ENCODE measurements at regions of chr11 and their contacts with region 1.

Region 1: GRCh38 chr11:96389720-96390487 is at the starts of genes CCDC82 and JRKL:
- DNase-seq: peak; percentile 96 to 99 (median 98)
- ATAC-seq: peak; percentile 99
- H3K4me3 ChIP-seq: peak within 1 kb of the TSS; percentile 66
- H3K4me3 Mint-ChIP-seq: peak within 1 kb of the TSS; percentile 84 to 99 (median 94)
- H3K27ac ChIP-seq: peak within 1 kb of the TSS; percentile 86
- H3K27ac Mint-ChIP-seq: peak within 1 kb of the TSS; percentile 71 to 97 (median 91)
- H3K4me1 ChIP-seq: peaks cover 17 to 18% of the 10 kb centered on the region in 2 donors
- H3K4me1 Mint-ChIP-seq: peaks cover 32 to 66% (median 60%) of the 10 kb centered on the region in 7 donors
- H3K27me3 ChIP-seq: no peaks in the 10 kb centered on the region
- H3K27me3 Mint-ChIP-seq: no peaks in the 10 kb centered on the region
- total RNA-seq, gene CCDC82: 21.9 to 46.2 (median 32.0) TPM
- total RNA-seq, gene JRKL: 5.4 to 17.3 (median 10.1) TPM

Region 2: GRCh38 chr11:94543695-94544645 is 1845.9 kb before region 1 on chr11 and contains the start of gene FUT4:
- CTCF ChIA-PET with region 1: no interaction called
- POLR2A ChIA-PET with region 1: no interaction called
- intact Hi-C with region 1: loop called in 1 of 2 experiments (anchors 5 kb)
- DNase-seq: peak; percentile 51 to 83 (median 70)
- ATAC-seq: peak; percentile 84
- H3K4me3 ChIP-seq: peak within 1 kb of the TSS; percentile 85
- H3K4me3 Mint-ChIP-seq: peak within 1 kb of the TSS; percentile 93 to 100 (median 98)
- H3K27ac ChIP-seq: peak within 1 kb of the TSS; percentile 88
- H3K27ac Mint-ChIP-seq: peak within 1 kb of the TSS; percentile 96 to 100 (median 99)
- H3K4me1 ChIP-seq: peaks cover 22 to 29% of the 10 kb centered on the region in 2 donors
- H3K4me1 Mint-ChIP-seq: peaks cover 24 to 49% (median 41%) of the 10 kb centered on the region in 7 donors
- H3K27me3 ChIP-seq: no peaks in the 10 kb centered on the region
- H3K27me3 Mint-ChIP-seq: no peaks in the 10 kb centered on the region
- total RNA-seq, gene FUT4: 5.6 to 10.2 (median 6.9) TPM

Region 3: DNA sequence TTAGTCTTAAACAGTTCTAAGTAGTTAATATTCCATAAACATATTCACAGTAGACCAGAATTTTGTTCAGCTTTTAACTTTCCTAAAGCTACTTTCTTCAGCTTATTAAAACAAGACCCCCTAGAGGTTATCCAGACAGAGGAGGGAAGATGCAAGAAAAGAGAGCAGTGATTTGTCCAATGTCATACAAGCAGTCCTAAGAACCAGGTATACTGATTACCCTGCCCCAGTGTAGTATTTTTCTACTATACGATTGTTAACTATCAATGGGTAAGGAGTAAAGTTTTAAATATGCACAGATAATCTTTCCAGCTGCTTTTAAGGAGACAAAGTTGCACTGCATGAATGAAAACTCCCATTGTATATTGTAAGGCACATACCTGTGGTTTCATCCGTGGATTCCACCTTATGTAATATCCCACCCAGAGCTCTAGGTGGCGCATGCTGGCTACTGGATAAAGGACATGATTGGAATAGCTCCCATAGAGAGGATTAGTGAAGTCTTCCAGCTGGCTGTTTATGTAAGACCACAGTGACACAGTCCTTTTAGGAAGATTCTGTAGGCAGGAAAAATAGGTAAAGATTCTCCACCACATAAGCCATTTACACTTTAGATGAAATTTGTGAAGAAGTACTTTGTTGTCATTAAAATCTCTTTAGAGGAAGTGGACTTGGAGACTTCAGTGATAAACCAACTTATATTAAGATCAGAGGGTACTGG is 554.0 kb before region 1 on chr11:
- CTCF ChIA-PET with region 1: interaction called, 43 read pairs
- POLR2A ChIA-PET with region 1: interaction called, 5 read pairs
- intact Hi-C with region 1: loop called (anchors 1 kb)
- DNase-seq: peak; percentile 17 to 67 (median 49)
- ATAC-seq: peak; percentile 96
- H3K4me3 ChIP-seq: no peak overlapping the region
- H3K4me3 Mint-ChIP-seq: no peak overlapping the region
- H3K27ac ChIP-seq: no peak overlapping the region
- H3K27ac Mint-ChIP-seq: peak overlapping the region in 4 of 9 donors; percentile 17 to 65 (median 28)
- H3K4me1 ChIP-seq: no peaks in the 10 kb centered on the region
- H3K4me1 Mint-ChIP-seq: peaks cover 0 to 5% (median 0%) of the 10 kb centered on the region in 7 donors
- H3K27me3 ChIP-seq: no peaks in the 10 kb centered on the region
- H3K27me3 Mint-ChIP-seq: no peaks in the 10 kb centered on the region

Region 4: DNA sequence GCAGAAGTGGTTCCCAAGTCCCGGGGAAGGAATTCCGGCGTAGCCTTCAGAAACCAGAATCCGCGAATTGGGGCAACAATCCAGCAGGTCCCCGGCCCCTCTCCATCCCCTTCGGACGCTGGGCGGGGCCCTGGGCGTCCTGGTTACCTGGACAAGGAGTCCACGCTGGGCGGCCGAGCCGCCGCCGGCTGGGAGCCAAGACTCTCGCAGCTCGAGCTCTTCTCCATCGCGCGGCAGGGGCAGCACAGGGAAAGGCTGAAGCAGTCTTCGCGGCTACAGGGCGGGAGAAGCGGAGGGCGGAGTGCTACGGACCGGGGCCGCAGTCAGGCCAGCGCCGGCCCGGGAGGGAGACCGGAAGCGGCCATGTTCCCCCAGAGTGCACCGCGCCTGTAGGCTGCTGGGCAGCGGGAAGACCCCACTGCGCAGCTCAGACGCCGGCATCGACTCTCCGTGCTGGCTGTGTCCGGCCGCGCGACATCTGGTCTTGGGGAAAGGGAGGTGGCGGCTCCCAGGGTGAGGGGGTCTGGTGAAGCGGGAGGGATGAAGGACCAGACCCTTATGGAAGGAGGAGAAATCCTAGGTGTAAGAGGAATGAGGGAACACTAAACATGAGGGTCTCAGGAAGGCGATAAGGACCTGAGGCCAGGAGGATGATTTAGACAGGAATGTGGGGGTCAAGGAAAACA is 466.0 kb before region 1 on chr11 and contains the start of gene MTMR2:
- CTCF ChIA-PET with region 1: no interaction called
- POLR2A ChIA-PET with region 1: no interaction called
- intact Hi-C with region 1: loop called (anchors 2 to 5 kb)
- DNase-seq: peak in 8 of 9 donors; percentile 16 to 70 (median 26)
- ATAC-seq: peak; percentile 87
- H3K4me3 ChIP-seq: peak within 1 kb of the TSS; percentile 91
- H3K4me3 Mint-ChIP-seq: peak within 1 kb of the TSS; percentile 85 to 98 (median 94)
- H3K27ac ChIP-seq: peak within 1 kb of the TSS; percentile 65
- H3K27ac Mint-ChIP-seq: peak within 1 kb of the TSS; percentile 80 to 96 (median 90)
- H3K4me1 ChIP-seq: peaks cover 0 to 12% of the 10 kb centered on the region in 2 donors
- H3K4me1 Mint-ChIP-seq: peaks cover 18 to 37% (median 25%) of the 10 kb centered on the region in 7 donors
- H3K27me3 ChIP-seq: no peaks in the 10 kb centered on the region
- H3K27me3 Mint-ChIP-seq: peaks cover 5 to 11% (median 8%) of the 10 kb centered on the region in 5 donors
- total RNA-seq, gene MTMR2: 9.0 to 20.8 (median 10.5) TPM

Region 5: GRCh38 chr11:96054870-96055705 is 334.8 kb before region 1 on chr11:
- CTCF ChIA-PET with region 1: interaction called, 20 read pairs
- POLR2A ChIA-PET with region 1: interaction called, 5 read pairs
- intact Hi-C with region 1: loop called (anchors 1 to 2 kb)
- DNase-seq: peak in 5 of 9 donors; percentile 15 to 41 (median 29)
- ATAC-seq: peak; percentile 72
- H3K4me3 ChIP-seq: no peak overlapping the region
- H3K4me3 Mint-ChIP-seq: peak overlapping the region in 4 of 10 donors; percentile 4 to 63 (median 32)
- H3K27ac ChIP-seq: no peak overlapping the region
- H3K27ac Mint-ChIP-seq: peak overlapping the region in 8 of 9 donors; percentile 15 to 88 (median 70)
- H3K4me1 ChIP-seq: peaks cover 0 to 16% of the 10 kb centered on the region in 2 donors
- H3K4me1 Mint-ChIP-seq: peaks cover 18 to 89% (median 77%) of the 10 kb centered on the region in 7 donors
- H3K27me3 ChIP-seq: no peaks in the 10 kb centered on the region
- H3K27me3 Mint-ChIP-seq: no peaks in the 10 kb centered on the region

Region 6: DNA sequence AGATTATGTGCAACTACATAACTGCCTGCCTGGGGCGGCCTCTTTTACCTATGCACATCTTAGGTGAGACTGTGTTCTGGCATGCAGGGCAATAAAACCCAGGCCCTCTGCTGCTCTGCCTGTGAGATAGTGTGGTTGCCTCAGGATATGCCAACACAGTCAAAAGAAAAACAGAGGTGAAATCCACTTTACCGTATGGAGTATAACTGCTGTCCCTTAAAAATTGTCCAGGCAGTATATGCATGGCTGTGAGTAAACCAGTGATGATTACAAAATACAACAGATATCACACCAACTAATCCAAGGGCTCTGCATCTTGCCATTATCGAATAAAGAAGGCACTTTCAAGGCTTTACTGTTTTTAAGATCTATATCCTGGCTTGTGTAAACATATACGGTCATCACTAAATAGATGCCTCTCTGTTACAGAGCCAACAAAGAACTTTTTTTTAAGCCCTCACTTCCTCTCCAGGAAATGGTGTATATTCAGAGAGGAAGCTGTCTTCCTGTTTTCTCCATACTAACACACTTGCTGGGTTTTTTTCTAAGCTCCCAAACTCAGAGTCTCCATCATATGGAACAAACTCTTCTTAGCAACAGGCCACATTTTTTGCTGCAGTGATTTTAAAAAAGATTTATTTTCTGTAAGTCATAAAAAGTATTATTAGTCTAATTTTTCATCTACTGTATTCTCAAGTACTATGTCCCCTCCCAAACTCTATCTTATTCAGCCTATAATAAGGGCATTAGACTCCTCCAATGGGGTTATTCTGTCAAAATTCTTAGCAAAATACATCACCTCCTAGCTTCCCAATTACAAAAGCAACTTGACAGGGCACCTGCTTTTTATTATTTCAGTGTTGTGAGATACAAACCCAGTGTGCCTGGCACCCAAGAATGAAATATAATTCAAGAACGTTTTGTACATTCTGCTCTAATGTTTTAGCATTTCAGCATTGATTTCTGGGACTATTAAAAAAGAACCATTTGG is 182.2 kb before region 1 on chr11:
- CTCF ChIA-PET with region 1: no interaction called
- POLR2A ChIA-PET with region 1: no interaction called
- intact Hi-C with region 1: loop called in 1 of 2 experiments (anchors 5 kb)
- DNase-seq: peak in 7 of 9 donors; percentile 43 to 73 (median 57)
- ATAC-seq: peak; percentile 70
- H3K4me3 ChIP-seq: peak overlapping the region; percentile 9
- H3K4me3 Mint-ChIP-seq: peak overlapping the region; percentile 51 to 84 (median 74)
- H3K27ac ChIP-seq: peak overlapping the region; percentile 62
- H3K27ac Mint-ChIP-seq: peak overlapping the region; percentile 86 to 99 (median 95)
- H3K4me1 ChIP-seq: peaks cover 70 to 93% of the 10 kb centered on the region in 2 donors
- H3K4me1 Mint-ChIP-seq: peaks cover 45 to 96% (median 92%) of the 10 kb centered on the region in 7 donors
- H3K27me3 ChIP-seq: no peaks in the 10 kb centered on the region
- H3K27me3 Mint-ChIP-seq: no peaks in the 10 kb centered on the region

Region 7: DNA sequence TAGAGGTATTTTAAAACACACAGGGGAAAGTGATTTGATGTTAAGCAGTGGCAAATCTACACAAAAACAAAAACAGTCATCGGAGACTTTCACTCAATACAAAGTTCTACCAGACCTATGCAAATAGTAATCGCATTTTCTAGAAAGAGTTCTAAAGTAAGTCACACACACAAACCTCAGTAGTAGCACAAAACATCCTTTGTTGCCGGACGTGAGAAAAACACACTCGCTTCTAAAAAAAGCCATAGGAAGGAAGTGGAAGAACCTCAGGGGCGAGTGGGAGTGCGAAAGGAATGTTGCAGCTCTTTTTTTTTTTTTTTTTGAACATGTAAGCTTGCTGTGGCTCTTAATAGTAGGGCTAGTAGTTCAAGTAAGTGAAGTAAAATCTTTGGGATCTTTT is 135.8 kb before region 1 on chr11:
- CTCF ChIA-PET with region 1: no interaction called
- POLR2A ChIA-PET with region 1: interaction called, 3 read pairs
- intact Hi-C with region 1: loop called (anchors 1 to 2 kb)
- DNase-seq: peak in 7 of 9 donors; percentile 32 to 64 (median 43)
- ATAC-seq: peak; percentile 32
- H3K4me3 ChIP-seq: peak overlapping the region; percentile 40
- H3K4me3 Mint-ChIP-seq: peak overlapping the region; percentile 74 to 87 (median 81)
- H3K27ac ChIP-seq: peak overlapping the region; percentile 77
- H3K27ac Mint-ChIP-seq: peak overlapping the region; percentile 87 to 100 (median 96)
- H3K4me1 ChIP-seq: peaks cover 58 to 78% of the 10 kb centered on the region in 2 donors
- H3K4me1 Mint-ChIP-seq: peaks cover 62 to 99% (median 94%) of the 10 kb centered on the region in 7 donors
- H3K27me3 ChIP-seq: no peaks in the 10 kb centered on the region
- H3K27me3 Mint-ChIP-seq: no peaks in the 10 kb centered on the region